Esophagus muscularis mucosa (tissue), 4 donors: ENCODE measurements at regions of chr12 and their contacts with region 1.

Region 1: GRCh38 chr12:66860752-66861750 is 182.2 kb upstream of the GRIP1 start:
- DNase-seq: no peak
- H3K4me3 ChIP-seq: no peak overlapping the region
- H3K27ac ChIP-seq: no peak overlapping the region
- H3K4me1 ChIP-seq: peaks cover 0 to 20% (median 17%) of the 10 kb centered on the region in 4 donors
- H3K27me3 ChIP-seq: no peaks in the 10 kb centered on the region
- CTCF ChIP-seq: peak; percentile 82 to 95 (median 89)
- EP300 ChIP-seq: no peak
- POLR2A ChIP-seq: no peak

Region 2: DNA sequence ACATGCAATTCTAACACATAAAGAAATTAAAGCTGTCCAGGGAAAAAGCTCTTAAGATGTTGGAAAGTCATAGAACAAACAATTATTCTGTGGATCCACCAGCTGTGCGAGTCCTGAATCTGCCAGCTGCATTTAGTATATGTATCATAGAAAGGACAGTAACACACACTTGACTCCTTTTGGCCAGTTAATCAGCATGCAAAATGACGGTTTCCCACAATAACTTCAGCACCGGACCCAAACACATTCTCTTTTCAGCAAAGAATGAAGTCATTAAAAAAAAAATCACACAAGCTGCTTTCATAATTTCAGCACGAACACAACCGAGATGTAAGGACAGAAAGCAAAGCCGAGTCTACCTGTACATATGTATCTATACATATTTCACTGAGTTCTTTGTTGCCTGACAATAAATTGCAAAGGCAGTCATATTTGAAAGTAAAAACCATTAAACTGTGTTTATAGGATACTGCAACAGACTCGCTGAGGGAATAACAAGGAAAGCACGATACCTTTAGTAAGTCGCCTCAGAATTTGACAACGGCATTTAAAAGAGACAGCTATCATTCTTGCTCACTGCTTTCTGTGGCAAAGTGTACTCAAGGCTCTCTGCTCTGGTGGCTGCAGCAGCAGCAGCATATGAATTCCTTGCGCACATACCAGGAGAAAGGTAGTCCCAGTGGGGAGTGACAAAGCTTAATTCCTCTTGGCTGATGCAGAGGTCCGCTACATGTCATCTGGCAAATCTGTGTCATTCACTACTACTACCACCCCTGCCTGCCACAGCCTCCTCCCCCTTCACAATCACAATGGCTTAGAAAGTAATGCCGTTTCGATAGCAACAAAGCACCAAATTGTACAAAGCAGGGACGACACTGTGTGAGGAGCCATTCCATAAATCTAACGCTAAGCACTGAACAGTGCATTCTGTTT is 182.4 kb before region 1 on chr12 and contains the start of gene GRIP1:
- intact Hi-C with region 1: no loop called
- DNase-seq: no peak
- H3K4me3 ChIP-seq: peak within 1 kb of the TSS in 2 of 4 donors; percentile 14 to 38
- H3K27ac ChIP-seq: no peak within 1 kb of the TSS
- H3K4me1 ChIP-seq: peaks cover 4 to 25% (median 12%) of the 10 kb centered on the region in 4 donors
- H3K27me3 ChIP-seq: no peaks in the 10 kb centered on the region
- CTCF ChIP-seq: no peak
- EP300 ChIP-seq: no peak
- POLR2A ChIP-seq: no peak
- total RNA-seq, gene GRIP1: 12.5 to 15.2 (median 13.6) TPM

Region 3: DNA sequence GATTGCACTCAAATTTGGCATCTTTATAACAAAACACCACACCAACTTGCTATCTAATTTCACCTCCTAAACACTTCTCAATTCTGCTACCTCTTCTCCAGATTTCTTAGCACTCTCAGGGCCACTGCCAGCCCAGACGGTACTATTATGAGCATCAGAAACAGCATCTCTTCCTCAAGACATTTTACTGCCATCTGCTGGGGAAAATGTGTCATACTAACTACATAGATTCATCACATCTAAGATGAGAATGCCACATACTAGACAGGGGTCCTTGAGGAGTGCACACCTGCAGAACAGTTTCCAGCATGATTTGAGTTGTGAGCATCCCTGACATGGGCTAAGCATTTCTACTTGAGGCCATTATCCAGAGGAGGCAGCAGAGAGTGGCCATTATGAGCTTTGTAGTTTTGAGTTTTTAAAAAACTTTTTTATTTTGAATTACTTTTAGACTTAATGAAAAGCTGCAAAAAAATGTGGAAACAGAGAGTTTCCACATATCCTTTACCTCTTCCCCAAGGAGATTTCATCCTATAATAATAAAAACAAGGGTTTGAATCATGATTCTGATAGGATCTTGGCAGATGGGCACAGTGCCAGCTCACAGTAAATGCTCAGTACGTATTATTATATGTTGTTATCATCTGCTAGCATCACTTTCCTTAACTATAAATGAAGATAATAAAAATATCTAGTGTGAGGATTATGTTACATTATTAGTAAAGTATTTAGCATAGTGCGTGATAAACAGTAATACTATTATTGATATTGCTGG is 167.0 kb before region 1 on chr12:
- intact Hi-C with region 1: loop called (anchors 5 kb)
- DNase-seq: no peak
- H3K4me3 ChIP-seq: no peak overlapping the region
- H3K27ac ChIP-seq: no peak overlapping the region
- H3K4me1 ChIP-seq: no peaks in the 10 kb centered on the region
- H3K27me3 ChIP-seq: no peaks in the 10 kb centered on the region
- CTCF ChIP-seq: peak; percentile 43 to 60 (median 57)
- EP300 ChIP-seq: no peak
- POLR2A ChIP-seq: no peak

Region 4: GRCh38 chr12:66739933-66740648 is 121.0 kb before region 1 on chr12:
- intact Hi-C with region 1: no loop called
- DNase-seq: no peak
- H3K4me3 ChIP-seq: no peak overlapping the region
- H3K27ac ChIP-seq: no peak overlapping the region
- H3K4me1 ChIP-seq: peaks cover 0 to 8% (median 0%) of the 10 kb centered on the region in 4 donors
- H3K27me3 ChIP-seq: no peaks in the 10 kb centered on the region
- CTCF ChIP-seq: no peak
- EP300 ChIP-seq: no peak
- POLR2A ChIP-seq: no peak

Region 5: DNA sequence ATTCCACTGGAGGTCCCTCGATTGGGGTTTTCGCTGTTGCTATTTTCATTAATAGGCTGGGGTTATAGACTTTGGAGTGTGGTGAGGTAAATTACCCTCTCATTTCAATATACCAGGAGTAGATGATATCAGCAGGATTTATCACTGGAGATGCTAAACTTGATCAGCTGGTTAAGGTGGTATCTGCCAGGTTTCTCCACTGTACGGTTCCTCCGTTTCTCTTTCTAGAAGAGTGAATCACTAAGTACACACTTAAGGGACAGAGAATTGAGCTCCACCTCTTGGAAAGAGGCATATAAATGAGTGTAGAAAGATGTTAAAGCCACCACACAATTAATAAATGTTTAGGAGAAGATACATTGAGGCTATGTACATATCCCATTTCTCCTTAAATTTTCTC is 95.2 kb after region 1 on chr12:
- intact Hi-C with region 1: no loop called
- DNase-seq: no peak
- H3K4me3 ChIP-seq: no peak overlapping the region
- H3K27ac ChIP-seq: no peak overlapping the region
- H3K4me1 ChIP-seq: peaks cover 0 to 10% (median 0%) of the 10 kb centered on the region in 4 donors
- H3K27me3 ChIP-seq: no peaks in the 10 kb centered on the region
- CTCF ChIP-seq: no peak
- EP300 ChIP-seq: no peak
- POLR2A ChIP-seq: no peak